Ovary (tissue), 10 donors: ENCODE measurements at regions of chr5 and their contacts with region 1.

Region 1: DNA sequence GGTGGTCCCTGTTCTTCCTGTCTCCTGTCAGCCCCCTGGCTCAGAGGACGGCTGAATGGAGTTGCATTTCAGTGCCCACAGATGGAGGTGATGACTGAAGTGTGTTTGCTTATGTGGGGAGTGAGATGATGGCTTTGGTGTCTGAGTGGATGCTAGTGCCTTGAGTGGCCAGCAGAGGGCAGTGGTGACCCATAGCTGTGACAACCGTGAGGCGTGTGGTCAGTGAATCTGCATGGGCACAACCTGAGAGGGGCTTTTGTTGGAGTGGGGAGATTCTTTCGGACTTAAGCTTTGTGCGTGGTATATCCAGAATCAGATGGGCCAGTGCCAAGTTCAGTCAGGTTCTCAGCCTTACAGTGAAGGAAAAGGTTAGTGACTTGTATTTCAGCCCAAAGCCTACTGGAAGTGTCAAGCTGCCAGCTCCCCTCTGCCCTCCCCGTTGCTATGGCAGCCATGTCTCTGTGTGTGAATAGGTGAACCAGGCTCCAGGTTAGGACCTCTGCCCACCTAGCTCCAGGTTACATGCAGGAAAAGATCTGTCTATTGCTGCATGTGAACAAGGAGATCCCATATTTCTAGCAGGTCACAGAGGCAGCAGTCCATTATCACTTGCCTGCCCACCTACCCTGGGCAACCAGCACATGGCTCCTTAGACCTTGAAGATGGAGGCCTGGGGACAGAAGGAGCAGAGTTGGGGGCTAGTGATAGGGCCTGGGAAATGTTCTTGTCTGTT is 14.7 kb upstream of the CXXC5 start:
- DNase-seq: peak; percentile 44 to 80 (median 73)
- H3K4me3 ChIP-seq: no peak overlapping the region
- H3K27ac ChIP-seq: no peak overlapping the region
- H3K4me1 ChIP-seq: peaks cover 8% of the 10 kb centered on the region
- H3K27me3 ChIP-seq: no peaks in the 10 kb centered on the region
- CTCF ChIP-seq: peak; percentile 78 to 95 (median 88)
- EP300 ChIP-seq: no peak
- POLR2A ChIP-seq: no peak

Region 2: GRCh38 chr5:139137702-139138101 is 495.8 kb before region 1 on chr5:
- intact Hi-C with region 1: no loop called
- DNase-seq: no peak
- H3K4me3 ChIP-seq: no peak overlapping the region
- H3K27ac ChIP-seq: no peak overlapping the region
- H3K4me1 ChIP-seq: peaks cover 32% of the 10 kb centered on the region
- H3K27me3 ChIP-seq: no peaks in the 10 kb centered on the region
- CTCF ChIP-seq: no peak
- EP300 ChIP-seq: no peak
- POLR2A ChIP-seq: no peak

Region 3: DNA sequence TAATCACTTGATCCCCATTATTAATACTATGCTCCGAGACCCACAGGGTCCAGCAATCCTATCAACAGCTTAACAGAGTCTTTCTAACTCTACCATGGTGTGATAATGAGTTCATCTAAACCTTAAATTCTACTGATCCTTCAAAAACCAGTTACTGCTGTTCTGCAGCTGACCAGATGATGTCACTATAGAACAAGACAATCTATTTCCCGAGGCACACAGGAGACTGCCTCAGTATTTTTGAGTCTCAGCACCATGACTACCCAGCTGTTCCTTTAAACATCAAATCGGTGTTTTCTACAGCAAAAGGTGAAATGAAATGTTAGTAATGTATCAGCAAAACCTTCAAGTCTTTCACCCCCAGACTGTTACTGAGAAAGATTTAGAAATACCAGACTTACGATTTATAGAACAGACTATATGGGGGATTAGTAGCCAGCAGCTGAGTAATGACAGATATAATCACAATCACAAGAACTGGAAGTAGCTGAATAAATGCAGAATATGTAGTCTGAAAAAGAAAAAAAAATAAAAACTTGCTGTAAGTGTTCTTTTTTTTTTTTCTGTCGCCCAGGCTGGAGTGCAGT is 211.1 kb before region 1 on chr5:
- intact Hi-C with region 1: loop called in 2 of 4 experiments (anchors 5 to 10 kb)
- DNase-seq: peak in 1 of 5 donors; percentile 48
- H3K4me3 ChIP-seq: no peak overlapping the region
- H3K27ac ChIP-seq: no peak overlapping the region
- H3K4me1 ChIP-seq: peaks cover 1% of the 10 kb centered on the region
- H3K27me3 ChIP-seq: no peaks in the 10 kb centered on the region
- CTCF ChIP-seq: peak; percentile 55 to 66 (median 58)
- EP300 ChIP-seq: no peak
- POLR2A ChIP-seq: no peak